ENCODE measurements at regions of chr12 and their contacts with region 1.

Region 1: DNA sequence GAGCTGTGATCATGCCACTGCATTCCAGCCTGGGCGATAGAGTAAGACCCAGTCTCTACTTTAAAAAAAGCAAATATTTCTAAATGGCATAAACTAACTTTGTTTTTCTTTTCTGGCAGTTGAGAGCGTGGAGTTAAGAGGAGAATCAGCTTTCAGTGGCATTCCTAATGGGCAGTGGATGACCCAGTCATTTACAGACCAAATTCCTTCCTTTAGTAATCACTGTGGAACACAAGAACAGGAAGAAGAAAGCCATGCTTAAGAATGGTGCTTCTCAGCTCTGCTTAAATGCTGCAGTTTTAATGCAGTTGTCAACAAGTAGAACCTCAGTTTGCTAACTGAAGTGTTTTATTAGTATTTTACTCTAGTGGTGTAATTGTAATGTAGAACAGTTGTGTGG is 21.2 kb downstream of the TDG start:
- H3K4me3 Mint-ChIP-seq: no peak overlapping the region
- H3K27ac Mint-ChIP-seq: no peak overlapping the region
- H3K4me1 Mint-ChIP-seq: no peaks in the 10 kb centered on the region
- H3K27me3 Mint-ChIP-seq: no peaks in the 10 kb centered on the region

Region 2: DNA sequence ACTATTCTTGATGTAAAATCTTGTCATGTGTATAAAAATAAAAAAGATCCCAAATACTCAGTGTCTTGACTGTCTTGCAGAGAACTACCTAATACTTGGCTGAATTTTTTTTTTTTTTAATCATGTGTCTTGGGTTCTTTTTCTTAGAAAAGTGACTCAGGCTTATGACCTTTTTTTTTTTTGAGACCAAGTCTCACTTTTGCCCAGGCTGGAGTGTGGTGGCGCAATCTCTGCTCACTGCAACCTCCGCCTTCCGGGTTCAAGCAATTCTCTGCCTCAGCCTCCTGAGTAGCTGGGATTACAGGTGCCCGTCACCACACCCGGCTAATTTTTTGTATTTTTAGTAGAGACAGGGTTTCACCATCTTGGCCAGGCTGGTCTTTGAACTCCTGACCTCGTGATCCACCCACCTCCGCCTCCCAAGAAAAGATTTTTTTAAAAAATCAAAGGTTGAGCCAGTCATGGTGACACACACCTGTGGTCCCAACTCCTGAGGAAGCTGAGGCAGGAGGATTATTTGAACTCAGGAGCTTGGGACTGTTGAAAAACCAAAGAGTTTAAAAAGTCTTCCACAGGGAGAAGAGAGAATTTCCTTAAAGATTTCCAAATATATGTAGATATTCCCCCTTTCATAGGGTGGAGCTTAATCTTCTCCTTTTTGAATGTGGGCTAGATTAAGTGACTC is 38.8 kb before region 1 on chr12:
- intact Hi-C with region 1: loop called (anchors 5 kb)
- H3K4me3 Mint-ChIP-seq: no peak overlapping the region
- H3K27ac Mint-ChIP-seq: peak overlapping the region; percentile 37
- H3K4me1 Mint-ChIP-seq: peaks cover 12% of the 10 kb centered on the region
- H3K27me3 Mint-ChIP-seq: no peaks in the 10 kb centered on the region

Region 3: GRCh38 chr12:104049903-104050356 is 63.1 kb after region 1 on chr12 and contains the start of gene GLT8D2:
- intact Hi-C with region 1: no loop called
- H3K4me3 Mint-ChIP-seq: no peak within 1 kb of the TSS
- H3K27ac Mint-ChIP-seq: no peak within 1 kb of the TSS
- H3K4me1 Mint-ChIP-seq: peaks cover 10% of the 10 kb centered on the region
- H3K27me3 Mint-ChIP-seq: peaks cover 42% of the 10 kb centered on the region

Region 4: GRCh38 chr12:104090687-104091086 is 103.9 kb after region 1 on chr12:
- intact Hi-C with region 1: loop called (anchors 10 kb)
- H3K4me3 Mint-ChIP-seq: no peak overlapping the region
- H3K27ac Mint-ChIP-seq: no peak overlapping the region
- H3K4me1 Mint-ChIP-seq: no peaks in the 10 kb centered on the region
- H3K27me3 Mint-ChIP-seq: no peaks in the 10 kb centered on the region

Region 5: GRCh38 chr12:104215638-104216297 is 228.9 kb after region 1 on chr12 and contains the start of gene TXNRD1:
- intact Hi-C with region 1: no loop called
- H3K4me3 Mint-ChIP-seq: peak within 1 kb of the TSS; percentile 81
- H3K27ac Mint-ChIP-seq: peak within 1 kb of the TSS; percentile 77
- H3K4me1 Mint-ChIP-seq: peaks cover 17% of the 10 kb centered on the region
- H3K27me3 Mint-ChIP-seq: peaks cover 13% of the 10 kb centered on the region

Measured in dendritic cell treated with granulocyte-macrophage colony-stimulating factor and Interleukin-4, amounts not matched to agents 40 ng/mL and 50 ng/mL, for 4 days (primary cell).